Uterus (tissue), 4 donors: ENCODE measurements at regions of chr9 and their contacts with region 1.

Region 1: GRCh38 chr9:88578121-88579054 is 43.4 kb downstream of the NXNL2 start:
- DNase-seq: peak; percentile 79 to 88
- H3K4me3 ChIP-seq: no peak overlapping the region
- H3K27ac ChIP-seq: no peak overlapping the region
- H3K4me1 ChIP-seq: no peaks in the 10 kb centered on the region
- H3K27me3 ChIP-seq: no peaks in the 10 kb centered on the region
- CTCF ChIP-seq: peak; percentile 82 to 99 (median 96)
- POLR2A ChIP-seq: no peak

Region 2: GRCh38 chr9:88399966-88400365 is 178.4 kb before region 1 on chr9:
- intact Hi-C with region 1: loop called (anchors 10 kb)
- DNase-seq: no peak
- H3K4me3 ChIP-seq: no peak overlapping the region
- H3K27ac ChIP-seq: peak overlapping the region in 1 of 2 donors; percentile 54
- H3K4me1 ChIP-seq: peaks cover 0 to 4% of the 10 kb centered on the region in 2 donors
- H3K27me3 ChIP-seq: no peaks in the 10 kb centered on the region
- CTCF ChIP-seq: no peak
- POLR2A ChIP-seq: no peak

Region 3: GRCh38 chr9:88722753-88723152 is 144.4 kb after region 1 on chr9:
- intact Hi-C with region 1: no loop called
- DNase-seq: no peak
- H3K4me3 ChIP-seq: no peak overlapping the region
- H3K27ac ChIP-seq: no peak overlapping the region
- H3K4me1 ChIP-seq: peaks cover 0 to under 1% of the 10 kb centered on the region in 2 donors
- H3K27me3 ChIP-seq: no peaks in the 10 kb centered on the region
- CTCF ChIP-seq: no peak
- POLR2A ChIP-seq: no peak